ENCODE measurements at regions of chr12 and their contacts with region 1.

Region 1: GRCh38 chr12:100154474-100155247 is 12.0 kb upstream of the BLTP3B start:
- DNase-seq: no peak
- H3K4me3 ChIP-seq: no peak overlapping the region
- H3K27me3 ChIP-seq: no peaks in the 10 kb centered on the region
- CTCF ChIP-seq: peak; percentile 94

Region 2: GRCh38 chr12:100142851-100143559 is 11.7 kb before region 1 on chr12 and contains the start of gene BLTP3B:
- CTCF ChIA-PET with region 1: interaction called, 36 read pairs
- POLR2A ChIA-PET with region 1: no interaction called
- DNase-seq: no peak
- H3K4me3 ChIP-seq: peak within 1 kb of the TSS; percentile 80
- H3K27me3 ChIP-seq: no peaks in the 10 kb centered on the region
- CTCF ChIP-seq: no peak
- polyA plus RNA-seq, gene BLTP3B: 11.9 and 19.3 TPM in 2 replicates

Region 3: GRCh38 chr12:100168586-100168985 is 13.9 kb after region 1 on chr12:
- CTCF ChIA-PET with region 1: interaction called, 32 read pairs
- POLR2A ChIA-PET with region 1: no interaction called
- DNase-seq: no peak
- H3K4me3 ChIP-seq: no peak overlapping the region
- H3K27me3 ChIP-seq: no peaks in the 10 kb centered on the region
- CTCF ChIP-seq: no peak

Region 4: DNA sequence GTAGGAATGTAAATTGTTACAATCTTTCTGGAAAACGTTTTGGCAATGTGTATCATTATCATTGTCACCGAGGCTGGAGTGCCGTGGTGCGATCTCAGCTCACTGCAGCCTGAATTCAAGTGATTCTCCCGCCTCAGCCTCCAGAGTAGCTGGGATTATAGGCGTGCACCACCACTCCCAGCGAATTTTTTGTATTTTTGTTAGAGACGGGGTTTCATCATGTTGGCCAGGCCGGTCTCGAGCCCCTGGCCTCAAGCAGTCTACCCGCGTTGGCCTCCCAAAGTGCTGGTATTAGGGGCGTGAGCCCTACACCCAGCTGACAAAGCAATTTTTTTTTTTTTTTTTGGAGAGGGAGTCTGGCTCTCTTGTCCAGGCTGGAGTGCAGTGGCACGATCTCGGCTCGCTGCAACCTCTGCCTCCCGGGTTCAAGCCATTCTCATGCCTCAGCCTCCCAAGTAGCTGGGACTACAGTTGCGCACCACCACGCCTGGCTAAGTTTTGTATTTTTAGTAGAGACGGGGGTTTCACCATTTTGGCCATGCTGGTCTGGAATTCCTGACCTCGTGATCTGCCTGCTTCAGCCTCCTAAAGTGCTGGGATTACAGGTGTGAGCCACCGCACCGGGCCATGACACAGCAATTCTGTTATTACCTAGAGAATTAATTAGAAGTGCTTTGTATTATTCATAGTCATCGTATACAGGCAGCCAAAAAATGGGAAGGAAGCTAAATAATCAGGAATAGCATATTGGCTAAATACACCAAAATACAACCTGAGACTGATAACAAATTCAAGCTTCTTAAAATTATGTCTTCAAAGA is 47.2 kb after region 1 on chr12:
- CTCF ChIA-PET with region 1: no interaction called
- POLR2A ChIA-PET with region 1: no interaction called
- DNase-seq: no peak
- H3K4me3 ChIP-seq: peak overlapping the region; percentile 72
- H3K27me3 ChIP-seq: no peaks in the 10 kb centered on the region
- CTCF ChIP-seq: no peak

Measured in BJ (cell line).